AG04449 (cell line): ENCODE measurements at regions of chr1 and their contacts with region 1.

Region 1: DNA sequence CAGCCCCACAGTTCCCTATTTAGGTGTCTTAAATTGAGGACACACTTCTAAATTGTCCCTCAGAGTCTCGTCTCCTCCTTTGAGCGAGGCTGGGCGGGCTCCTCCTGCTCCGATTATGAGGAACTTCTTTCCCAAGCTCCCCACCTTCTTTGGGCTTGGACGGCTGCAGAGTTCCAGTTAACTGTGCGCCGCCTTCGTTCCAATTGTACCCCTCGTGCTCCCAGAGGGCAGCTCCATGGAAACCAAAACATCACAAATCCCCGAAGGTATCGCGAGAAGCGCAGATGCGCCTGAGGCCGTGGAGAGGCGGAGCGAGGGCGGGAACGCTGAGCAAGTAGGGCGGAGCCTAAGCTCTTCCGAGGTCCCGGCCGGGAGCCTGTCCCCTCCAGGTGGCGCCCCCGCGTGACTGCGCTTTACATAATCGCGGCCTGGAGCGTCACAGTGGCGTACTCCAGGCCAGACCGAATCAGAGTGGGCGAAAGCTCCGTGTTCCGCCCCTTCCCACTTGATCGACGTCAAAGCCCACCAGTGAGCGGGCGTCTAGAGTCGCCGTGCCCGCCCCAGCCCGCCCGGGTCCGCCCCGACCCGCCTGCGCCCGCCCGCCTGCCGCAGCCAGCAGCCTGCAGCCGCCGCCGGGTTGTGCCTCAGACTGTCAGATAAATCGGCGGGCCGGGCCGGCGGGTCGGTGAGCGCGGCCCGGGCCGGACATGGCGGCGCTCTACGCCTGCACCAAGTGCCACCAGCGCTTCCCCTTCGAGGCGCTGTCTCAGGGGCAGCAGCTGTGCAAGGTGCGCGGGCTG is at the start of gene FAM76A:
- DNase-seq: peak; percentile 92
- H3K4me3 ChIP-seq: peak within 1 kb of the TSS; percentile 80
- CTCF ChIP-seq: peak; percentile 71

Region 2: GRCh38 chr1:27402349-27402754 is 323.2 kb before region 1 on chr1:
- CTCF ChIA-PET with region 1: no interaction called
- POLR2A ChIA-PET with region 1: no interaction called
- DNase-seq: no peak
- H3K4me3 ChIP-seq: no peak overlapping the region
- CTCF ChIP-seq: peak; percentile 81

Region 3: DNA sequence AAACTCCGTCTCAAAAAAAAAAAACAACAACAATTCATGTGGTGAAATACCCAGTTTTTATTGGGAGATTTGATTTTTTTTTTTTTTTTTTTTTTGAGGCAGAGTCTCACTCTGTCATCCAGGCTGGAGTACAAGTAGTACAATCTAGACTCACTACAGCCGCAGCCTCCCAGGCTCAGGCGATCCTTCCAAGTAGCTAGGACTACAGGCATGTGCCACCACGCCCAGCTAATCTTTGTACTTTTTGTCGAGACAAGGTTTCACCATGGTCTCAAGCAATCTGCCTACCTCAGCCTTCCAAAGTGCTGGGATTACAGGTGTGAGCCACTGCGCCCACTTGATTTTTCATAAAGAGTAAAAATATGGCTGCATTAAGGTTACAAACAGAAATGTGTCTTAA is 15.5 kb after region 1 on chr1:
- CTCF ChIA-PET with region 1: interaction called, 16 read pairs
- POLR2A ChIA-PET with region 1: no interaction called
- DNase-seq: no peak
- H3K4me3 ChIP-seq: no peak overlapping the region
- CTCF ChIP-seq: no peak

Region 4: DNA sequence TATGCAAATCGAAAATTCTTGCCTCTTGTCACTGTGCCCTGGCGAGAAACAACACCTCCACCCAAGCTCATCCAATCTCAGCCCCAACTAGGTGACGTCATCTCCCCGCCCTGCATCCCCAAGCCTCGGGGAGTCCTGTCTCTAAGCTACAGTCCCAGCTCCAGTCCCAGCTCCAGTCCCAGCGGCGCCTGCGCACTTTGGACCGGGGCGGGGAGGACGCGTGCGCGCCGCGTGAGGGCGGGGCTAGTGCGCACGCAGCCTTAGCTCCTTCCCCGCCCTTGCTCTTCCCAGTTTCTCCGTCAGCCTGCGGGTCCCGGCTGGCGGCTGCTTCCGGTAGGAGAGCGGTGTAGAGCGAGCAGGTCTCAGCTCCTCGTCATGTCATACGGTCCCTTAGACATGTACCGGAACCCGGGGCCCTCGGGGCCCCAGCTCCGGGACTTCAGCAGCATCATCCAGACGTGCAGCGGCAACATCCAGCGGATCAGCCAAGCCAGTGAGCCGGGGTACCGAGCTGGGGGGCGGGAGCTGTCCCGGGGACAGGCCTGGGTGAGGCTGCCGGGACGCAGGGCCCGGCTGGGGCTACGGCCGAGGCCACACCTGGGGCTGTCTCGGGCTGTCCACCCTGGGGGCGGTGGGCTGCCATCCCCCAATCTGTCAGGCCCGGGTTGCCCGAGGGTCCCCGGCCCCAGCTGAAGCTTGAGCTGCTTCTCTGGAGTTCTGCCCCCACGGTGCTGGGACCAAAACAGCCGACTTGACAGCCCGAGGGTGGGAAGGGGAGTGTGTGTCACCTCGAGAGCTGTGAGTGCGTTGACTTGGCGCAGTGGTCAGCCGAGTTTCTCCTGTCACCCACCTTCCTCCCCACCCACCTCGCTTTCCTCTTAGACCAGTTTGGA is 47.6 kb after region 1 on chr1 and contains the start of gene STX12:
- CTCF ChIA-PET with region 1: interaction called, 8 read pairs
- POLR2A ChIA-PET with region 1: interaction called, 12 read pairs
- DNase-seq: peak; percentile 98
- H3K4me3 ChIP-seq: peak within 1 kb of the TSS; percentile 87
- CTCF ChIP-seq: no peak

Region 5: GRCh38 chr1:28045777-28046176 is 320.2 kb after region 1 on chr1:
- CTCF ChIA-PET with region 1: no interaction called
- POLR2A ChIA-PET with region 1: no interaction called
- DNase-seq: no peak
- H3K4me3 ChIP-seq: no peak overlapping the region
- CTCF ChIP-seq: no peak